Aorta (tissue), 5 donors: ENCODE measurements at regions of chr6 and their contacts with region 1.

Region 1: DNA sequence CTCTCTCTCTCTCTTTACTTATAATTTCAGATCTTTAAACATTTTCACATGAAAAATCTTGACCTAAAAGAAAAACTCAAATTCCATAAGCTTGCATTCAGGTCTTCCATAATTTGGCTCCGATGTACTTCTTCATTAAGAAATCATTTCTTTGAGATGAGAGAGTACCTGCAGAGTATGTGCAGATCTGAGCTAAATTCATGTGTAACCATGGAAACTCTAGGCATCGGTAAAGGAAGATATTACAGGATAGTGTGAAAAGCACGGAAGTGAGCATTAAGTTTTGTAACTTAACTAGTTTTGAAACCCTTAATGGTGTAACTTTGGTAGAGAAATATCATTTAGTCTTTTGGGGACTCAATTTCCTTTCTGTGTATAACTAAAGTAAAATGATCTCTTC is 295.9 kb upstream of the SOX4 start:
- DNase-seq: no peak
- ATAC-seq: no peak
- H3K4me3 ChIP-seq: no peak overlapping the region
- H3K27ac ChIP-seq: no peak overlapping the region
- H3K4me1 ChIP-seq: no peaks in the 10 kb centered on the region
- H3K27me3 ChIP-seq: peaks cover 0 to 1% of the 10 kb centered on the region in 2 donors

Region 2: DNA sequence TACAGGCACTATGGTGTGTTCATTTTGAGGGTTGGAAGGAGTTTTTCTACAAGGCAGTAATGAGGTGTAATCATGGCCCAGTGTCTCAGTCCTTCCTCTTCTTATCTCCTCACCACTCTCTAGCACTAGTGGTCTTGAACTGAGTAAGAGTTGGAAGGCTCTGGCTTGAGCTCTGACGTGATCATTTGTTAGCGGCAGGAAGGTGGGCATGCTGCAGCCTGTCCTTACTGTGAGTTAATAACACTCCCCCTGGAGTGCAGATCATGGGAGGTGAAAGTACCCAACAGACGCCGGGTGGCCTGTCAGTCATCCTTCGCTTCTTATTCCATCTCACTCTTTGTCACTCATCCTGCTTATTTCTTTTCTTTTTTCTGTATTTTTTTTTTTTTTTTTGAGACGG is 406.5 kb before region 1 on chr6:
- intact Hi-C with region 1: no loop called
- DNase-seq: no peak
- ATAC-seq: no peak
- H3K4me3 ChIP-seq: no peak overlapping the region
- H3K27ac ChIP-seq: no peak overlapping the region
- H3K4me1 ChIP-seq: no peaks in the 10 kb centered on the region
- H3K27me3 ChIP-seq: no peaks in the 10 kb centered on the region

Region 3: GRCh38 chr6:21149470-21149869 is 148.2 kb before region 1 on chr6:
- intact Hi-C with region 1: no loop called
- DNase-seq: no peak
- ATAC-seq: no peak
- H3K4me3 ChIP-seq: no peak overlapping the region
- H3K27ac ChIP-seq: no peak overlapping the region
- H3K4me1 ChIP-seq: no peaks in the 10 kb centered on the region
- H3K27me3 ChIP-seq: no peaks in the 10 kb centered on the region

Region 4: DNA sequence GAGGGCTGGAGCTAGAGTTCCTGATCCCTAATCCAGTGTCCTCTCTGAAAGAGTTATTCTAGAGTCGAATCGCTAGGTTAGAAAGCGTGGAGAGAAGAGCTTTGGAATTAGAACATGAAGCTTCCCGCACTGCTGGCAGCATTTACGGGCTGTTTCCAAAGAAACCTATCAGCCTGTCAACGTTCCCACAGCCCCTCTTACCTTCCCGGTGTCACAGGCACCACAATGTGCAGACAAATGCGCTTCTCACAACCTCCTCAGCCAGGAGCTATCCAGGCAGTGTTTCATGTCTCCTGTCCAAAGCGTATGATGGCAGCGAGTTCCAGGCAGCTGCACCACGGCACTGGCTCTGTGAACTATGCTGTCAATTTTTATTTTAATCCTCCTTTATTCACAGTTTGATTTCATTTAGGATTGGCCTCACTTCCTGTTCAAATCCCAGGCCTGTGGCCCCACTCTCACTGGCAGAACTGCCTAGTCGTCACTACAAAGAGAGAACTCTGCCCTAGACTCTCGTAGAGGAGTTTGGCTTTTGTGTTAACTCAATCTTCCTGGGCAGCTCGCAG is 26.9 kb before region 1 on chr6:
- intact Hi-C with region 1: loop called in 1 of 2 experiments (anchors 2 kb)
- DNase-seq: no peak
- ATAC-seq: no peak
- H3K4me3 ChIP-seq: no peak overlapping the region
- H3K27ac ChIP-seq: no peak overlapping the region
- H3K4me1 ChIP-seq: no peaks in the 10 kb centered on the region
- H3K27me3 ChIP-seq: no peaks in the 10 kb centered on the region

Region 5: DNA sequence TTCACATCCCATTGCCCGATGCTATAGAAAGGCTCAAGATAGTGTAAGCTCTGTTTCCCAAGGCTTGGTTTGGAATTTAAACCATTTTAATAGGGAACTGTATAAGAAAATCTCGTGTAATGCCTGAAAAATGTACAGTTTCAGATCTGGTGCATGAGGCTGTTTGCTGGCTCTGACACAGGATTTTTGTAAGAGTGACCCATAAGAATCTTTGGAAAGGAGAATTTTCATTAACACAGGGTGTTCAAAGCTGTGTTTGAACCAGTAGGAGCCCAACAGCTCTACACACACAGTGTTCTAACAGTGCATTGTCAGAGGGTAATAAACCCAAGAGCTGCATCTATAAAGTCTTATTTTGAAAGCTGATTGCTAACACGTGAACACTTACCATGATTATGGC is 705.6 kb after region 1 on chr6:
- intact Hi-C with region 1: no loop called
- DNase-seq: no peak
- ATAC-seq: no peak
- H3K4me3 ChIP-seq: no peak overlapping the region
- H3K27ac ChIP-seq: no peak overlapping the region
- H3K4me1 ChIP-seq: peaks cover 1 to 9% of the 10 kb centered on the region in 2 donors
- H3K27me3 ChIP-seq: no peaks in the 10 kb centered on the region